ENCODE measurements at regions of chrX and their contacts with region 1.

Region 1: DNA sequence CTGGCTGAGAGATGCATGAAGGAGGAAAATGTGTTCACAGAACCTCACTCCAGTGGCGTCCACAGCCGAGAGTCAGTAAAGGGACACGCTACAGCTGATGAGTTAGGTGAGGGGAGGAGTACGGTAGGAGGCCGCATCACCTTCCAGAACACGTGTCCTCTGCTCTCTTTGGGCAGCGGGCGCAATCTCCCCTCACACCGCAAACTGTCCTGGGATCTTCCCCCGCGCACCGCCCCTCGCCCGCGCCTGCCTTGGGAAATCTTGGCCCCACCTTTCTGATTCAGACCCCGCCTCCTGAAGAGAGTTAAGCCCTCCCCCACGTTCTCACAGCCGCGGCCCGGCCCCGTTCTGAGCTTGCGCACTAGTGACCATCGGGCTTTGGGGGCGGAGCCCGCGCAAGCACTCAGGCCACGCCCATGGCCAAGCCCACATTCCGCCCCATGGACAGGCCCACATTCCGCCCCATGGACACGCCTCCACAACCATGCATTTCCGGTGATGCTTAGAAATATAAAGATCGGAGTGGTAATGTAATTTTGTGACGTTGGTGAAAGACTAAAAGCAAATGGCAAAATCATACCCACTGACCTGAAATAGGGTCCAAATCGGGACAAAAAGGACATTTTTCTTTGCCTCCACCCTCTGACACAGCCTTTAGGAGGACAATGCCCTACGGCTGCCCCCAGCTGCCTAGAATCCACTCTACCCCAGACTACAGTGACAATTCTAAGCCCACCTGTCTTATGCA is 13.3 kb downstream of the SMIM10 start:
- DNase-seq: peak; percentile 93
- H3K4me3 Mint-ChIP-seq: peak overlapping the region; percentile 84
- H3K27ac Mint-ChIP-seq: no peak overlapping the region
- H3K4me1 Mint-ChIP-seq: peaks cover 8% of the 10 kb centered on the region
- H3K27me3 Mint-ChIP-seq: no peaks in the 10 kb centered on the region

Region 2: GRCh38 chrX:134396174-134396573 is 607.9 kb before region 1 on chrX:
- CTCF ChIA-PET with region 1: no interaction called
- intact Hi-C with region 1: no loop called
- DNase-seq: no peak
- H3K4me3 Mint-ChIP-seq: no peak overlapping the region
- H3K27ac Mint-ChIP-seq: no peak overlapping the region
- H3K4me1 Mint-ChIP-seq: peaks cover 9% of the 10 kb centered on the region
- H3K27me3 Mint-ChIP-seq: no peaks in the 10 kb centered on the region

Region 3: DNA sequence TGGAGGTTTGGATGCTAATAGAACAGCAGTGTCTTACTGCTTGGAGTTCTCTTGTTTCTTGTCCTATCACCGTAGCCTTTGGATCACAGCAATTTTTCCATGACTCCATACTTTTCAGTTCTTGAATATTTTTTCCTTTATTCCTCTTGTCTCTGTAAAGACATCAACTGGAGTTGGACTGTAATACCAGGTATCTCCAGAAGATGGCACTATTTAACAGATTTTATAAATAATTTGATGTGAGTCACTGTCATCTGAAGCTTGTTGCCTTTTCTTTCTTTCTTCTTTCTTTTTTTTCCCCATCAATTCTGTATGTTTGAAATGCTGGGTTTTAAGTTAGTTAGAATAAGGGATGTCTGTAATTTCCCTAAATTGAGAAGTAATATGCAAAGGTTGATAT is 520.0 kb before region 1 on chrX:
- CTCF ChIA-PET with region 1: no interaction called
- intact Hi-C with region 1: loop called (anchors 1 kb)
- DNase-seq: no peak
- H3K4me3 Mint-ChIP-seq: no peak overlapping the region
- H3K27ac Mint-ChIP-seq: no peak overlapping the region
- H3K4me1 Mint-ChIP-seq: peaks cover 3% of the 10 kb centered on the region
- H3K27me3 Mint-ChIP-seq: no peaks in the 10 kb centered on the region

Region 4: GRCh38 chrX:134969726-134970125 is 34.3 kb before region 1 on chrX:
- CTCF ChIA-PET with region 1: interaction called, 3 read pairs
- intact Hi-C with region 1: loop called (anchors 1 kb)
- DNase-seq: no peak
- H3K4me3 Mint-ChIP-seq: no peak overlapping the region
- H3K27ac Mint-ChIP-seq: no peak overlapping the region
- H3K4me1 Mint-ChIP-seq: no peaks in the 10 kb centered on the region
- H3K27me3 Mint-ChIP-seq: peaks cover 2% of the 10 kb centered on the region

Region 5: GRCh38 chrX:135024526-135024925 is 20.5 kb after region 1 on chrX:
- CTCF ChIA-PET with region 1: no interaction called
- intact Hi-C with region 1: loop called (anchors 1 kb)
- DNase-seq: no peak
- H3K4me3 Mint-ChIP-seq: no peak overlapping the region
- H3K27ac Mint-ChIP-seq: no peak overlapping the region
- H3K4me1 Mint-ChIP-seq: peaks cover 14% of the 10 kb centered on the region
- H3K27me3 Mint-ChIP-seq: peaks cover 7% of the 10 kb centered on the region

Region 6: DNA sequence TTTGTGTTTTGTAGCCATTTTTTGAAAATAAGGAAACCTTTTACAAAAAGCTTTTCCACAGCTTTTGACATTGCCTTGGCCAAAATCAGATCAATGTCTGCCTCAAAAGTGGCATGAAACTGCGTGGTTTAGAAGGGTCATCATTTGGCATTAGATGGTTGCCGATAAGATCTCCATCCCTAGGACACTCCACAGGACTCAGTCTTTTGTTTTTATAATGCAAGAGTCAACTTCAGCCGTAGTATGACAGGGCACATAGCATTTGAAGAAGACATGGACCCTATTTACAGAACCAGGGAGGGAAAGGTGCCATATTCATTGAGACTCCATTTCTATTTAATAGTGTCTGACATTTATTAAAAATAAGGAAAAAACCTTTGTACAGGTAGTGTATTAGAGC is 46.6 kb after region 1 on chrX:
- CTCF ChIA-PET with region 1: no interaction called
- intact Hi-C with region 1: loop called (anchors 1 kb)
- DNase-seq: no peak
- H3K4me3 Mint-ChIP-seq: peak overlapping the region; percentile 87
- H3K27ac Mint-ChIP-seq: no peak overlapping the region
- H3K4me1 Mint-ChIP-seq: peaks cover 21% of the 10 kb centered on the region
- H3K27me3 Mint-ChIP-seq: no peaks in the 10 kb centered on the region

Region 7: DNA sequence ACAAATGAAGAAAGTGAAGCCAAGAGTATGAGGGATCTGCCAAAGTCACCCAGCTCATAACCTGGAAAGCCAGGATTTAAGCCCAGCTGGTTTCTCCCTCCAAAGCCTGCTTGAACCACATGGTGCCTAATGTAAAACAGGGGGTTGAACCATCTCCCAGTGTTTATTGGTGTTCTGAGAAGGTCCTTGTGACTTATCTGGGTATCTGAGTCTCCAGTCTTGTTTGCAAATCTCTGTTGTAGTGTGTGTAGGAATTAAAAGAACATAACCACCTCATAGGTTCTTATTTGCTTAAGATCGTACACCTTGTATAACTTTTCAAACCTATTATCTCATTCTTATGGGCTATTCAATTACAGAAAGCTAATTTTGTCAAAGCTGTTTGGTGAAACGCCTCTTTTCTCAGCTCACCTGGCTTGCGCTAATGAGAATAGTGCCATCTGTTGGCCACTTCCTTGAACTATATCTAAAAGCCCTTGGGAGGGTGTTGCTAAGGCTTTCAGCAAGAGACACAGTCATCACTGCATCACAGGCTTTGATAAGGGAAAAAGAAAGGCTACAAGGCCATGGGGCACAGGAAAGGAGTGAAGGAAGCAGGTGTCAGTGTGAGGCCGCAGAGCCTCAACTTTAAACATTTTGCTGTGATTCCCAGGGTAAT is 82.3 kb after region 1 on chrX:
- CTCF ChIA-PET with region 1: no interaction called
- intact Hi-C with region 1: loop called (anchors 1 kb)
- DNase-seq: peak; percentile 58
- H3K4me3 Mint-ChIP-seq: no peak overlapping the region
- H3K27ac Mint-ChIP-seq: no peak overlapping the region
- H3K4me1 Mint-ChIP-seq: peaks cover 3% of the 10 kb centered on the region
- H3K27me3 Mint-ChIP-seq: no peaks in the 10 kb centered on the region